Left cardiac atrium (tissue), 4 donors: ENCODE measurements at regions of chr19 and their contacts with region 1.

Region 1: GRCh38 chr19:2475702-2476450 is at the start of gene GADD45B:
- DNase-seq: peak; percentile 98
- ATAC-seq: peak; percentile 81 to 84
- total RNA-seq, gene GADD45B: 64.0 to 189 TPM

Region 2: DNA sequence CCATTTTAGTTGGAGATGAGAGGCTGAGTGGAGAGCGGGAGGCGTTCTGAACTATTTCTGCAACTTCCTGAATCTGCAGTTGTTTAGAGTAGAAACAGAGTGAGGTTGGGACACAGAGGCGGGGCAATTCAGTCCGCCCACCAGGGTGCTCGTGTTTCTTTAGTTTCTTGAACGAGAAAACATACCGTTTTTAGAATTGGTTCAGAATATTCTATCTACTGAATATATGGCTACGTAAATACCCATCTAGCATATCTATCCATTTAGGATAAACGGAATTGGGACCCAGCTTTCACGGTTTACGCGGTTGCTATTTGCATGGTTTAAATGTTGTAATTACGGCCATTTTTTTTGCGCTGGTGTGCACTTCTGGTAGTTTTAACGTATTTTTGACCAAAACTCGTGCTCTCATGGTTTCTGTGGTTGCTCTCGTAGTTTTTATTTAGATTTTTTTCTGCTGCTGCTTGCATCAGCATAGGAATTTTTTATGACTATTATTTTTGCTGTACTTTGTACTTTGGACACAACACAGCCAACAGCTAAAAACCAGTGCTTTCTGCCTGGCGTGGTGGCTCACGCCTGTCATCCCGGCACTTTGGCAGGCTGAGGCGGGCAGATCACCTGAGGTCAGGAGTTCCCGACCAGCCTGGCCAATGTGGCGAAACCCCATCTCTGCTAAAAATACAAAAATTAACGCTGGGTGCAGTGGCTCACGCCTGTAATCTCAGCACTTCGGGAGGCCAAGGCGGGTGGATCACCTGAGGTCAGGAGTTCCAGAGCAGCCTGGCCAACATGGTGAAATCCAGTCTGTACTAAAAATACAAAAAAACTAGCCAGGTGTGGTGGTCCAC is 81.2 kb before region 1 on chr19:
- intact Hi-C with region 1: no loop called
- DNase-seq: no peak
- ATAC-seq: no peak

Region 3: GRCh38 chr19:2578901-2579677 is 103.2 kb after region 1 on chr19:
- intact Hi-C with region 1: loop called (anchors 1 to 10 kb)
- DNase-seq: peak; percentile 89
- ATAC-seq: peak; percentile 87 to 89

Region 4: GRCh38 chr19:2610637-2611482 is 135.0 kb after region 1 on chr19:
- intact Hi-C with region 1: loop called (anchors 2 kb)
- DNase-seq: peak; percentile 96
- ATAC-seq: peak; percentile 93 to 94

Region 5: GRCh38 chr19:2653710-2654707 is 178.1 kb after region 1 on chr19:
- intact Hi-C with region 1: no loop called
- DNase-seq: no peak
- ATAC-seq: peak in 1 of 2 donors; percentile 86